ENCODE measurements at regions of chr2 and their contacts with region 1.

Region 1: GRCh38 chr2:218568190-218569037 is at the starts of genes CNOT9 and USP37:
- DNase-seq: peak; percentile 97
- ATAC-seq: peak; percentile 97
- H3K4me3 ChIP-seq: peak within 1 kb of the TSS; percentile 87
- H3K27ac ChIP-seq: peak within 1 kb of the TSS; percentile 92
- H3K4me1 ChIP-seq: no peaks in the 10 kb centered on the region; the same call in 1 of the 2 replicates
- H3K27me3 ChIP-seq: no peaks in the 10 kb centered on the region
- CTCF ChIP-seq: no peak
- POLR2A ChIP-seq: peak; percentile 42
- RAD21 ChIP-seq: no peak
- total RNA-seq, gene CNOT9: 70.5 and 71.0 TPM in 2 replicates
- total RNA-seq, gene USP37: 6.5 and 7.5 TPM in 2 replicates

Region 2: GRCh38 chr2:218269899-218270720 is 298.3 kb before region 1 on chr2 and contains the starts of genes AAMP and PNKD:
- CTCF ChIA-PET with region 1: no interaction called
- POLR2A ChIA-PET with region 1: no interaction called
- dilution Hi-C with region 1: no loop called
- in situ Hi-C with region 1: no loop called
- intact Hi-C with region 1: loop called (anchors 10 kb)
- DNase-seq: peak; percentile 99
- ATAC-seq: peak; percentile 94
- H3K4me3 ChIP-seq: peak within 1 kb of the TSS; percentile 72
- H3K27ac ChIP-seq: peak within 1 kb of the TSS; percentile 64
- H3K4me1 ChIP-seq: peaks cover 10% of the 10 kb centered on the region
- H3K27me3 ChIP-seq: no peaks in the 10 kb centered on the region
- CTCF ChIP-seq: peak; percentile 28
- POLR2A ChIP-seq: peak; percentile 93
- RAD21 ChIP-seq: no peak
- total RNA-seq, gene AAMP: 112 and 118 TPM in 2 replicates
- total RNA-seq, gene PNKD: 19.2 and 22.2 TPM in 2 replicates

Region 3: GRCh38 chr2:218406209-218406948 is 162.0 kb before region 1 on chr2:
- CTCF ChIA-PET with region 1: interaction called, 4 read pairs
- POLR2A ChIA-PET with region 1: no interaction called
- dilution Hi-C with region 1: no loop called
- in situ Hi-C with region 1: no loop called
- intact Hi-C with region 1: loop called (anchors 1 kb)
- DNase-seq: peak; percentile 89
- ATAC-seq: peak; percentile 93
- H3K4me3 ChIP-seq: peak overlapping the region; percentile 44
- H3K27ac ChIP-seq: peak overlapping the region; percentile 78
- H3K4me1 ChIP-seq: peaks cover 17% of the 10 kb centered on the region
- H3K27me3 ChIP-seq: no peaks in the 10 kb centered on the region
- CTCF ChIP-seq: peak; percentile 88
- POLR2A ChIP-seq: peak; percentile 42; the same call in 1 of the 2 replicates
- RAD21 ChIP-seq: peak; percentile 79

Region 4: GRCh38 chr2:218607436-218608115 is 39.2 kb after region 1 on chr2 and contains the start of gene PLCD4:
- CTCF ChIA-PET with region 1: no interaction called
- POLR2A ChIA-PET with region 1: no interaction called
- dilution Hi-C with region 1: no loop called
- in situ Hi-C with region 1: no loop called
- intact Hi-C with region 1: loop called (anchors 5 kb)
- DNase-seq: peak; percentile 80
- ATAC-seq: peak; percentile 89
- H3K4me3 ChIP-seq: peak within 1 kb of the TSS; percentile 16
- H3K27ac ChIP-seq: peak within 1 kb of the TSS; percentile 35; the same call in 1 of the 2 replicates
- H3K4me1 ChIP-seq: peaks cover 8% of the 10 kb centered on the region
- H3K27me3 ChIP-seq: no peaks in the 10 kb centered on the region; the same call in 1 of the 2 replicates
- CTCF ChIP-seq: 0 out of 2 replicates have a peak, but pooled peaks have one; percentile 12
- POLR2A ChIP-seq: no peak
- RAD21 ChIP-seq: no peak
- total RNA-seq, gene PLCD4: 1.4 and 2.0 TPM in 2 replicates

Region 5: GRCh38 chr2:218648088-218648786 is 79.8 kb after region 1 on chr2:
- CTCF ChIA-PET with region 1: no interaction called
- POLR2A ChIA-PET with region 1: no interaction called
- dilution Hi-C with region 1: no loop called
- in situ Hi-C with region 1: no loop called
- intact Hi-C with region 1: loop called (anchors 1 kb)
- DNase-seq: peak; percentile 70
- ATAC-seq: peak; percentile 96
- H3K4me3 ChIP-seq: no peak overlapping the region
- H3K27ac ChIP-seq: no peak overlapping the region
- H3K4me1 ChIP-seq: no peaks in the 10 kb centered on the region
- H3K27me3 ChIP-seq: no peaks in the 10 kb centered on the region
- CTCF ChIP-seq: peak; percentile 83
- POLR2A ChIP-seq: no peak
- RAD21 ChIP-seq: peak; percentile 84

Region 6: GRCh38 chr2:219178377-219179175 is 610.2 kb after region 1 on chr2:
- CTCF ChIA-PET with region 1: no interaction called
- POLR2A ChIA-PET with region 1: no interaction called
- dilution Hi-C with region 1: no loop called
- in situ Hi-C with region 1: no loop called
- intact Hi-C with region 1: no loop called
- DNase-seq: peak; percentile 15
- ATAC-seq: peak; percentile 27
- H3K4me3 ChIP-seq: peak overlapping the region; percentile 64
- H3K27ac ChIP-seq: peak overlapping the region; percentile 84
- H3K4me1 ChIP-seq: 0 out of 2 replicates have a peak, but pooled peaks cover 6% of the 10 kb centered on the region
- H3K27me3 ChIP-seq: no peaks in the 10 kb centered on the region
- CTCF ChIP-seq: no peak
- POLR2A ChIP-seq: no peak
- RAD21 ChIP-seq: no peak

Measured in IMR-90 (cell line).